HAP-1 (cell line): ENCODE measurements at regions of chr13 and their contacts with region 1.

Region 1: GRCh38 chr13:28324181-28324789 is 170.6 kb downstream of the FLT1 start:
- DNase-seq: peak; percentile 76 to 83
- H3K4me3 ChIP-seq: no peak overlapping the region
- H3K4me1 ChIP-seq: no peaks in the 10 kb centered on the region
- H3K27me3 ChIP-seq: no peaks in the 10 kb centered on the region

Region 2: DNA sequence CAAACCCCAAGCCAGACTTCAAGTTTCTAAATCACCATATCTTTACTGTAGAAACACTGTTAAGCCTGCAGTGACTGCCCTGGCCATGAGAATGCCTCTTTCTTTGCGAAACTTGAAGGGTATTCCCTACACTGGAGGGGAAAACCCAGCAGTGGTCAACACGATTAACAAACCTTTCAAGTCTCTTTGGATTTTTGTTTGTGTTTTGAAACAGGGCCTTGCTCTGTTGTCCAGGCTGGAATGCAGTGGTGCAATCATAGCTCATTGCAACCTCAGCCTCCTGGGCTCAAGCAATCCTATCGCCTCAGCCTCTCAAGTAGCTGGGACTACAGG is 317.3 kb after region 1 on chr13:
- in situ Hi-C with region 1: loop called (anchors 5 kb)
- DNase-seq: no peak
- H3K4me3 ChIP-seq: no peak overlapping the region
- H3K4me1 ChIP-seq: peaks cover 11% of the 10 kb centered on the region
- H3K27me3 ChIP-seq: no peaks in the 10 kb centered on the region

Region 3: GRCh38 chr13:28792992-28793391 is 468.7 kb after region 1 on chr13:
- in situ Hi-C with region 1: loop called (anchors 10 kb)
- DNase-seq: no peak
- H3K4me3 ChIP-seq: no peak overlapping the region
- H3K4me1 ChIP-seq: 0 out of 2 replicates have a peak, but pooled peaks cover 3% of the 10 kb centered on the region
- H3K27me3 ChIP-seq: peaks cover 27% of the 10 kb centered on the region

Region 4: DNA sequence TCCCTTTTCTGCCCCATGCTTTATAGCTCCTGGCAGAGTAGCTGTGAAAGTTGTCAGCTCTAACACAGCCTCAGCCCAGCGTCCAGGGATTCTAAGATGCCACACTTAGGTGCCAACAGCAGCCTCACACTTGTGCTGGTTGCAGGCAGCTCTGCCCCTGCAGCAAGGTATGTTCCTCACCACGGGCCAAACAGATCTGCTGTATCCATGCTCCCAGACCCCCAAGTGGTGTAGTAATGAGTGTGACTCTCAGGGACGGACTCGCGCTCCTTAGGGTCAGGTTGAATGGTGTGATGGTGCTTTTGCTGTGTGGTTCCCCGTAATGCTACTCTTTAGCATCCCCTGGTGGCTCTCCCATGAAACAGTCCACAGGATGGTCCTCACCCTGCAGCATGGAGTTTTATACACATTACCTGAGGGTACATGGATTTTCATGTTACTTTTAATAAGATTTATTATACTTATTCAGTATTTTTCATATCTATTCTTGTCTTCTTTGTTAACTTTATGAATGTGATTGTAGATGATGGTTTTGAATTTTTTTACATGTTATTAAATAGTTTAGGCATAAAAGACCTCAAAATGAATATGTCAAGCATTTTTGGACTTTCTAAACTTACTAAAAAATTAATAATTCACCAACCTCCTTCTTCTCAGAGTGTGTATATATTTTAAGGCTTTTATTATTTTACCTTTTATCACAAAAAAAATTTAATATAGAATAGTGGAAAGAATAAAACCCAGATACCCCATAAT is 1038.7 kb after region 1 on chr13:
- in situ Hi-C with region 1: loop called (anchors 25 kb)
- DNase-seq: peak; percentile 57 to 71
- H3K4me3 ChIP-seq: no peak overlapping the region
- H3K4me1 ChIP-seq: no peaks in the 10 kb centered on the region
- H3K27me3 ChIP-seq: 0 out of 2 replicates have a peak, but pooled peaks cover 2% of the 10 kb centered on the region